Activated CD4-positive, alpha-beta T cell treated with anti-CD3 and anti-CD28 coated beads for 36 hours (primary cell): ENCODE measurements at regions of chr11 and their contacts with region 1.

Region 1: GRCh38 chr11:128522055-128522942 is 65.1 kb downstream of the ETS1 start:
- DNase-seq: peak; percentile 95
- ATAC-seq: peak; percentile 70
- H3K4me3 Mint-ChIP-seq: peak overlapping the region; percentile 96
- H3K27ac Mint-ChIP-seq: peak overlapping the region; percentile 99
- H3K4me1 Mint-ChIP-seq: peaks cover 42% of the 10 kb centered on the region
- H3K27me3 Mint-ChIP-seq: no peaks in the 10 kb centered on the region

Region 2: GRCh38 chr11:128238521-128239265 is 283.6 kb before region 1 on chr11:
- CTCF ChIA-PET with region 1: interaction called, 3 read pairs
- POLR2A ChIA-PET with region 1: no interaction called
- intact Hi-C with region 1: loop called in 1 of 2 experiments (anchors 2 kb)
- DNase-seq: no peak
- ATAC-seq: peak; percentile 94
- H3K4me3 Mint-ChIP-seq: peak overlapping the region; percentile 39
- H3K27ac Mint-ChIP-seq: peak overlapping the region; percentile 84
- H3K4me1 Mint-ChIP-seq: peaks cover 34% of the 10 kb centered on the region
- H3K27me3 Mint-ChIP-seq: no peaks in the 10 kb centered on the region

Region 3: GRCh38 chr11:128342511-128343134 is 179.7 kb before region 1 on chr11:
- CTCF ChIA-PET with region 1: interaction called, 3 read pairs
- POLR2A ChIA-PET with region 1: interaction called, 4 read pairs
- intact Hi-C with region 1: loop called in 1 of 2 experiments (anchors 1 kb)
- DNase-seq: peak; percentile 91
- ATAC-seq: peak; percentile 68
- H3K4me3 Mint-ChIP-seq: peak overlapping the region; percentile 65
- H3K27ac Mint-ChIP-seq: peak overlapping the region; percentile 95
- H3K4me1 Mint-ChIP-seq: peaks cover 97% of the 10 kb centered on the region
- H3K27me3 Mint-ChIP-seq: no peaks in the 10 kb centered on the region

Region 4: GRCh38 chr11:128497061-128497775 is 25.1 kb before region 1 on chr11:
- CTCF ChIA-PET with region 1: interaction called, 4 read pairs
- POLR2A ChIA-PET with region 1: interaction called, 5 read pairs
- intact Hi-C with region 1: loop called in 1 of 2 experiments (anchors 1 kb)
- DNase-seq: peak; percentile 52
- ATAC-seq: peak; percentile 8
- H3K4me3 Mint-ChIP-seq: peak overlapping the region; percentile 70
- H3K27ac Mint-ChIP-seq: peak overlapping the region; percentile 99
- H3K4me1 Mint-ChIP-seq: peaks cover 95% of the 10 kb centered on the region
- H3K27me3 Mint-ChIP-seq: no peaks in the 10 kb centered on the region

Region 5: DNA sequence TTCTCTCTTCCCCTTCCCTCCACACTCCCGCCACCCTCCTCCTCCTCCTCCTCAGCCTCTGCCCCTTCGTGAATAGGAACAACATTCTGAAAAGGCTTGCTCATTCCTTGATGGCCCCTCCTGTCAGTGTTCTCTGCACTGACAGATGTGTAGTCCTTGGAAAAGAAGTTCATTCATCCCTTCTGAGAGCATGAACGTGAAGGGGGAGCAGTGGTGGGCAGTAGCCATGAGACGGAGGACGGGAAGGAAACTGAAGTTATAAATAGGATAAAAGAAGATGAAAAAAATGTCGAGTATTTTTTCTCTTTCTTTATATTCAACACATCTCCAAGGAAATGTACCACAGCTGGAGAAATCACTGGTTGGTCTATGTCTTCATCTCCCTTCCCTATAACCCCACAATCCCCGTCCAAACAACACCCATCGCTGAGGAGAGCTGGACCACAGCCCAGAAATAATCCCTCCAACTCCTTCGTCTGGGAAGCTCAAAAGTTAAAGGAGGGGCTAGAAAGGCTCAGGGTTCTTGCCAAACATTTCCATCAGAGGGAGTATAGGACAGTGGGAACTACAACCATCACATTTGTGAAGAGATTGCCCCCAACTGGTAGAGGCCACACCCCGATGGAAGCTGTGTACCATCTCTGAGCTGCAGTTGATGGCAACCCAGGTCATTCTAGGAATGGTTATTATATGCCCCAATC is 31.5 kb after region 1 on chr11:
- CTCF ChIA-PET with region 1: interaction called, 8 read pairs
- POLR2A ChIA-PET with region 1: interaction called, 7 read pairs
- intact Hi-C with region 1: loop called (anchors 1 kb)
- DNase-seq: no peak
- ATAC-seq: no peak
- H3K4me3 Mint-ChIP-seq: no peak overlapping the region
- H3K27ac Mint-ChIP-seq: peak overlapping the region; percentile 94
- H3K4me1 Mint-ChIP-seq: peaks cover 56% of the 10 kb centered on the region
- H3K27me3 Mint-ChIP-seq: no peaks in the 10 kb centered on the region

Region 6: DNA sequence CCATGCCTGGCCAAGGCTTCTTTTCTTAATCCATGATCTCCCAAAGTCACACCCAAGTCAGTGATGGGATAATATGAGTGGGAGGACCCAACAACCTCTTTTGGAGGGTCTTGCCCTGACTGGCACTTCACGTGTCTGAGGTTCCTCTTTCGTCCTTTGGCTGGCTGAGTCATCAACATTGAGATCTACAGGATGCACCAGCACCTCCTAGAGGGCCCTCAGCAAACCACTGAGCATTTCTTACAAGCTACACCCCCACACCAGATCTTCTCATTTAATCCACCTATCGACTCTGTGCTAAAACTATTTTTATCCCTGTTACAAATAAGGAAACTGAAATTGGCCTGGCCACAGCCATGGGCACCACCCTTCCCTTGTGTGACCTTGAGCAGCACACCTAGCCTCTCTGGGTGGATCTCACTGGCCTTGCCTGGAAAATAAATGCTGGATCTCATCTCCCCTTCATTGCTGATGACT is 235.0 kb after region 1 on chr11:
- CTCF ChIA-PET with region 1: interaction called, 4 read pairs
- POLR2A ChIA-PET with region 1: no interaction called
- intact Hi-C with region 1: loop called (anchors 1 to 5 kb)
- DNase-seq: peak; percentile 83
- ATAC-seq: peak; percentile 78
- H3K4me3 Mint-ChIP-seq: peak overlapping the region; percentile 32
- H3K27ac Mint-ChIP-seq: peak overlapping the region; percentile 95
- H3K4me1 Mint-ChIP-seq: peaks cover 79% of the 10 kb centered on the region
- H3K27me3 Mint-ChIP-seq: no peaks in the 10 kb centered on the region